ENCODE measurements at regions of chr2 and their contacts with region 1.

Region 1: GRCh38 chr2:65264821-65265670 is 37.4 kb downstream of the ACTR2 start:
- DNase-seq: no peak
- ATAC-seq: peak; percentile 36
- H3K4me3 Mint-ChIP-seq: no peak overlapping the region
- H3K27ac Mint-ChIP-seq: no peak overlapping the region
- H3K4me1 Mint-ChIP-seq: peaks cover 11% of the 10 kb centered on the region
- H3K27me3 Mint-ChIP-seq: no peaks in the 10 kb centered on the region

Region 2: GRCh38 chr2:65276609-65277008 is 11.6 kb after region 1 on chr2:
- CTCF ChIA-PET with region 1: interaction called, 12 read pairs
- POLR2A ChIA-PET with region 1: no interaction called
- intact Hi-C with region 1: no loop called
- DNase-seq: no peak
- ATAC-seq: no peak
- H3K4me3 Mint-ChIP-seq: no peak overlapping the region
- H3K27ac Mint-ChIP-seq: no peak overlapping the region
- H3K4me1 Mint-ChIP-seq: peaks cover 12% of the 10 kb centered on the region
- H3K27me3 Mint-ChIP-seq: peaks cover 1% of the 10 kb centered on the region

Measured in activated CD4-positive, alpha-beta T cell treated with anti-CD3 and anti-CD28 coated beads for 36 hours (primary cell).